Natural killer cell (primary cell): ENCODE measurements at regions of chr6 and their contacts with region 1.

Region 1: DNA sequence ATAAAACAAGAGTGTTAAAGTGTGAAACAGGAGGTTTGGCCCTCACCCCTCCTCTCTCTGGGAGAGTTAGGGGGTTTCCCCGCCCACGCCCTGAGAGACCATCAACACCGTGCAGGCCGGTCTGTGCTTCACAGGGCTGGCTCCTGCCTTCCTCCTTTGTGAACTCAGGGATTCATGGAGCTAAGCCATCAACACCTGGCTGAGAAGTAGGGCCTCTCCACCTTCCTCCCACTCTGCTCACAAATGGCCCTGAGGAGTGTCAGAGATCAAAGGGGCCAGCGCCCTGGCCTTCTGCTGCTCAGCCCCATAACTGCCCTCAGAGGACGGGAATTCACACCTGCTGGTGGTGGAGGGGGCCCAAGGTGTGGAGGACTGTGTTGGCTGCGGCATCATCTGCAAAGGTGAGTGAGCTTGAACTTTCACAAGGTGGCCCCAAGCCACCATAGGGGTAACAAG is 88.6 kb downstream of the PSMB1 start:
- DNase-seq: peak; percentile 63 to 77
- ATAC-seq: peak; percentile 71 to 87 (median 83)
- H3K4me3 ChIP-seq: peak overlapping the region; percentile 32
- H3K4me3 Mint-ChIP-seq: peak overlapping the region; percentile 89
- H3K27ac ChIP-seq: peak overlapping the region; percentile 86
- H3K27ac Mint-ChIP-seq: peak overlapping the region; percentile 96
- H3K4me1 ChIP-seq: peaks cover 80% of the 10 kb centered on the region
- H3K4me1 Mint-ChIP-seq: peaks cover 74 to 75% of the 10 kb centered on the region in 2 donors
- H3K27me3 ChIP-seq: no peaks in the 10 kb centered on the region
- H3K27me3 Mint-ChIP-seq: no peaks in the 10 kb centered on the region
- CTCF ChIP-seq: no peak

Region 2: DNA sequence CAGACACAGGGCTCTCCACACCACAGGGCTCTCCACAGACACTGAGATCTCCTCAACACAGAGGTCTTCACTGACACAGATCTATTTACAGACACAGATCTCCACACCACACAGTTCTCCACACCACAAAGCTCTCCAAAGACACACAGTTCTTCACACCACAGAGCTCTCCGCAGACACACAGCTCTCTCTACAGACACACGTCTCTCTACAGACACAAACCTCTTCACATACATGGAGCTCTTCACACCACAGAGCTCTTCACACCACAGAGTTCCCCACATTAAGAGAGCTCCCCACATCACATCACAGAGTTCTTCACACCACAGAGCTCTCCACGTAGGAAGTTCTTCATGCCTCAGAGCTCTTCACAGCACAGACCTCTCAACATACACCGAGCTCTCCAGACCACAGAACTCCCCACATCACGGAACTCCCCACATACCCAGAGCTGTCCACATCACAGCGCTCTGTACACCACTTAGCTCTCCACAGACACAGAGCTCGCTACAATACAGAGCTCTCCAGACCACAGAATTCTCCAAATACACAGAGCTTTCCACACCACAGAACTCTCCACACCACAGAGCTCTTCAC is 659.2 kb before region 1 on chr6:
- intact Hi-C with region 1: loop called (anchors 5 kb)
- DNase-seq: peak in 1 of 2 donors; percentile 51
- ATAC-seq: peak; percentile 19 to 55 (median 40)
- H3K4me3 ChIP-seq: no peak overlapping the region
- H3K4me3 Mint-ChIP-seq: peak overlapping the region; percentile 33
- H3K27ac ChIP-seq: no peak overlapping the region
- H3K27ac Mint-ChIP-seq: peak overlapping the region; percentile 72 to 87
- H3K4me1 ChIP-seq: peaks cover 73% of the 10 kb centered on the region
- H3K4me1 Mint-ChIP-seq: peaks cover 68 to 72% of the 10 kb centered on the region in 2 donors
- H3K27me3 ChIP-seq: peaks cover 5% of the 10 kb centered on the region
- H3K27me3 Mint-ChIP-seq: peaks cover 39 to 44% of the 10 kb centered on the region in 2 donors
- CTCF ChIP-seq: no peak

Region 3: GRCh38 chr6:170087941-170088581 is 376.5 kb before region 1 on chr6:
- intact Hi-C with region 1: loop called (anchors 5 kb)
- DNase-seq: peak; percentile 55 to 81
- ATAC-seq: peak; percentile 66 to 79 (median 74)
- H3K4me3 ChIP-seq: peak overlapping the region; percentile 48
- H3K4me3 Mint-ChIP-seq: peak overlapping the region; percentile 86
- H3K27ac ChIP-seq: peak overlapping the region; percentile 88
- H3K27ac Mint-ChIP-seq: peak overlapping the region; percentile 94 to 96
- H3K4me1 ChIP-seq: peaks cover 56% of the 10 kb centered on the region
- H3K4me1 Mint-ChIP-seq: peaks cover 29 to 52% of the 10 kb centered on the region in 2 donors
- H3K27me3 ChIP-seq: no peaks in the 10 kb centered on the region
- H3K27me3 Mint-ChIP-seq: no peaks in the 10 kb centered on the region
- CTCF ChIP-seq: no peak

Region 4: DNA sequence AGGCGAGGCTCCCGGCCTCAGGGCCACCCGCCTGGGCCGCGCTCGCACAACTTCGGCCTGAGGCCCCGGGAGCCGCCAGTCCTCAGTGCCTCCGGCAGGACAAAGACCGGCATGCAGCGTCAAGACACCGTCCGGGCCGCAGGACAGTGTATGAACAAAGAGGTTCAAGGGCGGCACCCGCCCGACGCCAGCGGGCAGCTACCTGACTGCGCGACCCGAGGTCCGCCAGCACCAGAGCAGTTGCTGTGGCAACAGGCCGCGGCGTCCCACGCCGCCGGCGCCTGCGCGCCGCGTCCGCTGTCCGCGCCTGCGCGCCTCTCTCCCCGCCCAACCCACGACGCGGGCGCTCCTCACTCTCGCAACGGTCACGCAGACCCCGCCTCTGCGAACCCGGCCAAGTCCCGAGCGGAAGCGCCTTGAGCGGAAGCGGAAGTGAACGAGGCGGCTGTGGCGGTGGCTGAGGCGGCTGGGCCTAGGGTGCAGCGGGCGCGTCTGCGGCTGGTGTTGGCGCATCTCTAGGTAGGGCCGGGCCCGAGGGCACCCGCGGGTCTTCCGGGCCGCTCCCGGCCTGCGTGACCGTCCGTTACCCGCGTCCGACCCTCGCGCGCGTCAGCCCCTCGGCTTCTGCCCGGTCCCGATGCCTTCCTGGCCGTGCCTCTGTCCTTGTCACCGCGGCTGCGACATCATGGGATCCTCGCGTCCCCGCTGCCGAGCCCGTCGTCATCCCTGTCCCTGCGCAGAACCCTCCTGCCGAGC is 158.1 kb before region 1 on chr6 and contains the start of gene FAM120B:
- intact Hi-C with region 1: loop called (anchors 5 kb)
- DNase-seq: peak; percentile 95 to 98
- ATAC-seq: peak; percentile 94 to 98 (median 95)
- H3K4me3 ChIP-seq: peak within 1 kb of the TSS; percentile 87
- H3K4me3 Mint-ChIP-seq: peak within 1 kb of the TSS; percentile 96
- H3K27ac ChIP-seq: peak within 1 kb of the TSS; percentile 86
- H3K27ac Mint-ChIP-seq: peak within 1 kb of the TSS; percentile 92 to 93
- H3K4me1 ChIP-seq: peaks cover 25% of the 10 kb centered on the region
- H3K4me1 Mint-ChIP-seq: peaks cover 42% of the 10 kb centered on the region in 2 donors
- H3K27me3 ChIP-seq: no peaks in the 10 kb centered on the region
- H3K27me3 Mint-ChIP-seq: peaks cover 20 to 22% of the 10 kb centered on the region in 2 donors
- CTCF ChIP-seq: no peak
- total RNA-seq, gene FAM120B: 37.8 to 55.6 (median 39.9) TPM

Region 5: DNA sequence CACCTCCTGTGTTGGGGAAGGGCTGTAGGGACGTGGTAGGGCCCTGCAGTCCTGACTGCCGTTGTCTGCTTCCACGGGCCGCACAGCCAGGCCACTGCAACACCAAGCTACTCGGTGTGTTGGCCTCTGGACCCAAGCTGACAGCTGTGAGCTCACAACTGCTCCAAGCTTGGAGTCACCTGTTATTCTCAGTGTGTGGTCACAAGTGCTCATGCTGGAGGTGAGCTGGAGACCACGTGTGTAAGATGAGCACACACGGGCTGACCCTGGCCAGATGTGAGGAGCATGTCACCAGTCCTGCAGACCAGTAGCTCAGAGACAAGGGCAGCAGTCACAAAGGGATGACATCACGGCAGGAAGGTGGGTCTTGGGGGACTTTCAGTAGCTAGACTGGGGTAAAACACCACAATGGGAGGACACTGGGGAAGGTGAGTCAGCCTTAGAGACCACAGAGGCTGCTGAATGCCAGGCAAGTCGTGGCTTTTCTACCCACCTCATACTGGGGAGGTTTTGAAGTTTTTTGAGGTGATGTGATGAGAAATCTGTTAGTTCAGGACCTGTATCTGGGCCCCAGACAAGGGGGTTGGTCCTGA is 70.6 kb before region 1 on chr6:
- intact Hi-C with region 1: no loop called
- DNase-seq: no peak
- ATAC-seq: peak in 2 of 3 donors; percentile 76 to 81
- H3K4me3 ChIP-seq: no peak overlapping the region
- H3K4me3 Mint-ChIP-seq: no peak overlapping the region
- H3K27ac ChIP-seq: no peak overlapping the region
- H3K27ac Mint-ChIP-seq: peak overlapping the region; percentile 81
- H3K4me1 ChIP-seq: peaks cover 26% of the 10 kb centered on the region
- H3K4me1 Mint-ChIP-seq: peaks cover 12 to 32% of the 10 kb centered on the region in 2 donors
- H3K27me3 ChIP-seq: no peaks in the 10 kb centered on the region
- H3K27me3 Mint-ChIP-seq: no peaks in the 10 kb centered on the region
- CTCF ChIP-seq: no peak

Region 6: GRCh38 chr6:170443151-170443662 is 21.3 kb before region 1 on chr6:
- intact Hi-C with region 1: loop called (anchors 1 kb)
- DNase-seq: no peak
- ATAC-seq: no peak
- H3K4me3 ChIP-seq: no peak overlapping the region
- H3K4me3 Mint-ChIP-seq: peak overlapping the region; percentile 55
- H3K27ac ChIP-seq: peak overlapping the region; percentile 92
- H3K27ac Mint-ChIP-seq: peak overlapping the region; percentile 86 to 95
- H3K4me1 ChIP-seq: peaks cover 73% of the 10 kb centered on the region
- H3K4me1 Mint-ChIP-seq: peaks cover 72 to 77% of the 10 kb centered on the region in 2 donors
- H3K27me3 ChIP-seq: no peaks in the 10 kb centered on the region
- H3K27me3 Mint-ChIP-seq: no peaks in the 10 kb centered on the region
- CTCF ChIP-seq: no peak

Region 7: GRCh38 chr6:170522565-170523183 is 58.1 kb after region 1 on chr6:
- intact Hi-C with region 1: no loop called
- DNase-seq: no peak
- ATAC-seq: peak in 1 of 3 donors; percentile 41
- H3K4me3 ChIP-seq: no peak overlapping the region
- H3K4me3 Mint-ChIP-seq: no peak overlapping the region
- H3K27ac ChIP-seq: no peak overlapping the region
- H3K27ac Mint-ChIP-seq: no peak overlapping the region
- H3K4me1 ChIP-seq: peaks cover 18% of the 10 kb centered on the region
- H3K4me1 Mint-ChIP-seq: peaks cover 24 to 27% of the 10 kb centered on the region in 2 donors
- H3K27me3 ChIP-seq: peaks cover 12% of the 10 kb centered on the region
- H3K27me3 Mint-ChIP-seq: peaks cover 39 to 44% of the 10 kb centered on the region in 2 donors
- CTCF ChIP-seq: no peak

Region 8: DNA sequence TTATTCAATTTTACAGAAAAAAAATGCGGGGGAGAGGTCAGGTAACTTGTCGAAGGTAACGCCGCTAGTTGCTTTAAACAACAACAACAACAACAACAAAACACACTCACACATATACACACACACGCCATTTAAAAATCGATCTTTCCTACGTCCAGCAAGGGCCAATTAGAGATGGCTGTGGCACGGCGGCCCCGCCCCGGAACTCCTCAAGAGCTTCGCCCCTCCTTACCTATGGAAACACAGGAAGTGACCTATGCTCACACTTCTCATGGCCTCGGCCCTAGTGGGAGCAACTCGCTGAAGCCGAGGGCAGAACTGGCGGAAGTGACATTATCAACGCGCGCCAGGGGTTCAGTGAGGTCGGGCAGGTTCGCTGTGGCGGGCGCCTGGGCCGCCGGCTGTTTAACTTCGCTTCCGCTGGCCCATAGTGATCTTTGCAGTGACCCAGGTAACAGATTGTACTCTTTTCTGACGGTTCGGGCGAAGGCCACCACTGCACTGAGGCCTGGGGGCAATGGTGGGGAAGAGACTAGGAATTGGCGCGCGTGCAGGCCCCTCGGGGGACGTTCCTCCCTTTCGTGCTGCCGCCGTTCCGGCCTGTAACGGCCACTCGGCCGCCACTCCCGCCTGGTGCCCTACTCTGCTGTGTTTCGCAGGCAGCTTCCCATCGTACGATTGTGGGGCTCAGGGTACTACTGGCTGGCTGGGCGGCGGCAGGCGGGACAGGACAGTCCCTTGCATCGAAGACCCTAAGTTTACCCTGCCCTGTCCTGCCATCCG is 89.7 kb after region 1 on chr6 and contains the start of gene TBP:
- intact Hi-C with region 1: loop called (anchors 1 kb)
- DNase-seq: peak; percentile 98 to 99
- ATAC-seq: peak; percentile 88 to 97 (median 92)
- H3K4me3 ChIP-seq: peak within 1 kb of the TSS; percentile 84
- H3K4me3 Mint-ChIP-seq: no peak within 1 kb of the TSS
- H3K27ac ChIP-seq: peak within 1 kb of the TSS; percentile 93
- H3K27ac Mint-ChIP-seq: no peak within 1 kb of the TSS
- H3K4me1 ChIP-seq: peaks cover 22% of the 10 kb centered on the region
- H3K4me1 Mint-ChIP-seq: peaks cover 5 to 31% of the 10 kb centered on the region in 2 donors
- H3K27me3 ChIP-seq: no peaks in the 10 kb centered on the region
- H3K27me3 Mint-ChIP-seq: no peaks in the 10 kb centered on the region
- CTCF ChIP-seq: no peak
- total RNA-seq, gene TBP: 13.0 to 18.4 (median 14.2) TPM